ENCODE measurements at regions of chr5 and their contacts with region 1.

Region 1: DNA sequence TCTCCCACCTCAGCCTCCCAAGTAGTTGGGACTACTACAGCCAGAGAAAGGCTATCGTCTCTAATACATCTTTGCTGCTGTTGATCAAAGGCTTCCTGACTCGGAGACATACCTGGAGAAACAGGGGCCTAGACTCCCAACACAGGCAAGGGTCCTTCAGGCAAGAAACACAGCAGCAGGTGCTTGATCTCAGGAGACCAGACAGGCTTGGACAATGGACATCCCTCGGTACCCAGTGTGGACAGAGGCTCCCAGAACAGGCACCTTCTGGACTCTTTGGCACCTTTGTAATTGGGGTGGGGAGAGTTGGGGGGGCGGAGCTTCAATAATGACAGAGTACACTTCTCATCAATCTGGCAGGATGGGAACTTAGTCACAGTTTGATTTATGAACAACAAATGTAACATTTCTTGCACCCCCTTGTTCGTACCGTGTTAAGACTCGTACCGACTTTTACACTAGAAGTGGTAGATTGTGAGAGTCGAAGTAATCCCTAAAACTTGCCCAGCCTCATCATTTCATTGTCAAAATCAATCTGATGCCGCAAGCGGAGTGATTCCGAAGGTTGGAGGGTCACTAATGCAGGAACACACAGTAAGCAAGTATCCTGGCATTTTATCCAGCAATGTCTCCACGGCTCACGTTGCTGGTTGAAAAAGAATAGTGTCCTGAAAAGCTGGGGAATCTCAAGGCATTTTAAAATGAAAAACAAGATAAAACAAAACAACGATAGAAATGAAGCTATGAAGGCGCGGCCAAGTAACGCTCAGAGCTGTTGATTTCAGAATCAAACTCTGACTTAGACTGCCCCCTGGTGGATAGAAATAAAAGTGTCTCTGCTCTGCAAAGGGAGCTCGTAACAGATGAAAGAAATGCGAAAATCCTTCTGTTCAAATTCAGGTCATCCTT is 46.4 kb upstream of the STK32A start:
- DNase-seq: peak; percentile 45 to 61
- H3K4me3 ChIP-seq: no peak overlapping the region
- H3K27ac ChIP-seq: no peak overlapping the region
- H3K4me1 ChIP-seq: peaks cover 7 to 14% of the 10 kb centered on the region in 2 donors
- H3K27me3 ChIP-seq: no peaks in the 10 kb centered on the region
- CTCF ChIP-seq: peak; percentile 75 to 92 (median 84)
- POLR2A ChIP-seq: no peak

Region 2: DNA sequence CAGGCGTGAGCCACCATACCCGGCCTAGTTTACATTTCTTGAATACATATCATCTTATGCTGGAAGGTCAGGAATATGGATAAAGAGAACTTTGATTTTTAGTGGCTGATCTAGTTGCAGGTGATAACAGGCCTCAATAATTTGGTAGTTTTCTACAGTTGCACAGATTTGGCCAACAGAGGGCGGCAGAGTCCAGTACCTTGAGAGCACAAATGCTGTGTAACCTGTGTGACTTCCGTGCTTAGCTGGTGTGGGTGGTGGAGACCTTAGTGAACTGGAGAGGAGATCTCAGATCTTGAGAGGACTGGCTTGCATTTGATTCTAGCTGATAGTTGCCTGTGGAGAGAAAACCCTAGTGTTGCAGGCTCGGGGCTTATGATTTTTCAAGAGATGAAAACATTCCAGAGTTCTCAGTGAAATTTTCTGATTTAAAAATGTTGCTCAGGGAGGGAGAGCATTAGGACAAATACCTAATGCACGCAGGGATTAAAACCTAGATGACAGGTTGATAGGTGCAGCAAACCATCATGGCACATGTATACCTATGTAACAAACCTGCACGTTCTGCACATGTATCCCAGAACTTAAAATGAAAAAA is 655.1 kb before region 1 on chr5:
- intact Hi-C with region 1: loop called (anchors 10 kb)
- DNase-seq: peak; percentile 62 to 78
- H3K4me3 ChIP-seq: no peak overlapping the region
- H3K27ac ChIP-seq: no peak overlapping the region
- H3K4me1 ChIP-seq: no peaks in the 10 kb centered on the region
- H3K27me3 ChIP-seq: no peaks in the 10 kb centered on the region
- CTCF ChIP-seq: peak; percentile 45 to 74 (median 59)
- POLR2A ChIP-seq: no peak

Region 3: GRCh38 chr5:146993876-146994530 is 194.5 kb before region 1 on chr5:
- intact Hi-C with region 1: no loop called
- DNase-seq: peak in 1 of 2 donors; percentile 5
- H3K4me3 ChIP-seq: no peak overlapping the region
- H3K27ac ChIP-seq: no peak overlapping the region
- H3K4me1 ChIP-seq: peaks cover 0 to 7% of the 10 kb centered on the region in 2 donors
- H3K27me3 ChIP-seq: no peaks in the 10 kb centered on the region
- CTCF ChIP-seq: no peak
- POLR2A ChIP-seq: no peak

Region 4: DNA sequence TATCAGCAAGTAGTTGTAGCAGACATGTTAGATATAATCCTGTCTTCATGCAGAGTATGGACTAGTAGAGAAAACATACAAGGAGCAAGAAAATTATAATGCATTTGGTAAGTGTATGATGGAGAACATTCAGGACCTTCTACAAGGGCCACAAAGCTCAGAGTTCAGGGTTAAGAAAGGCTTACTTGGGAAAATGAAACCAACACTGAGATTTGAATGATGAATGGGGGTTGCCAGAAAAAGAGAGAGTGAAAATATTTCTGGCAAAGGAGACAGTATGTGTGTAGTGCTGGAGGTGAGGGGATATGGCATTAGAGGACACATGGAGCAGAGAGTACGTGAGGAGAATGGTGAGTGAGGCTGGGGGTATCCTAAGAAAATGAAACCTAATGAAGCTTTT is 123.4 kb before region 1 on chr5:
- intact Hi-C with region 1: no loop called
- DNase-seq: no peak
- H3K4me3 ChIP-seq: no peak overlapping the region
- H3K27ac ChIP-seq: no peak overlapping the region
- H3K4me1 ChIP-seq: peaks cover 7 to 11% of the 10 kb centered on the region in 2 donors
- H3K27me3 ChIP-seq: no peaks in the 10 kb centered on the region
- CTCF ChIP-seq: no peak
- POLR2A ChIP-seq: no peak

Region 5: DNA sequence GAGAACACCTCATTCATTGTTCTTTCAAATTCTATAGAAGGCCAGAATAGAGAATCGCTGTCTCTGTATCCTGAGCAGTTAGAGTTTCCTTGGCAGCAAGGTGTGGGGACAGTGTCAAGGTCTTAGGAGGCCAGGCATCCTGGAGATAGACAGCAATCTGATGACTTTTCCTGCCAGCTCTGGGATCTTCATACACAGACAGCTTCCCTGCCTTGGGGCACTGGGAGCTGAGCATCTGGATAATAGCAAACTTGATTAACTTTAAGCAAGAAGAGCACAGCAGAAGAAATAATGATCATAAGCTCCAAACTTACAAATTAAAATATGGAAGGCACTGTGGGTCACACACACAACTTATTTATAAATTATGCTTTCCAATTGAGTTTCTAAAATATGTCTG is 39.7 kb before region 1 on chr5:
- intact Hi-C with region 1: no loop called
- DNase-seq: no peak
- H3K4me3 ChIP-seq: no peak overlapping the region
- H3K27ac ChIP-seq: no peak overlapping the region
- H3K4me1 ChIP-seq: no peaks in the 10 kb centered on the region
- H3K27me3 ChIP-seq: no peaks in the 10 kb centered on the region
- CTCF ChIP-seq: no peak
- POLR2A ChIP-seq: no peak